Endothelial cell of umbilical vein (primary cell): ENCODE measurements at regions of chr4 and their contacts with region 1.

Region 1: DNA sequence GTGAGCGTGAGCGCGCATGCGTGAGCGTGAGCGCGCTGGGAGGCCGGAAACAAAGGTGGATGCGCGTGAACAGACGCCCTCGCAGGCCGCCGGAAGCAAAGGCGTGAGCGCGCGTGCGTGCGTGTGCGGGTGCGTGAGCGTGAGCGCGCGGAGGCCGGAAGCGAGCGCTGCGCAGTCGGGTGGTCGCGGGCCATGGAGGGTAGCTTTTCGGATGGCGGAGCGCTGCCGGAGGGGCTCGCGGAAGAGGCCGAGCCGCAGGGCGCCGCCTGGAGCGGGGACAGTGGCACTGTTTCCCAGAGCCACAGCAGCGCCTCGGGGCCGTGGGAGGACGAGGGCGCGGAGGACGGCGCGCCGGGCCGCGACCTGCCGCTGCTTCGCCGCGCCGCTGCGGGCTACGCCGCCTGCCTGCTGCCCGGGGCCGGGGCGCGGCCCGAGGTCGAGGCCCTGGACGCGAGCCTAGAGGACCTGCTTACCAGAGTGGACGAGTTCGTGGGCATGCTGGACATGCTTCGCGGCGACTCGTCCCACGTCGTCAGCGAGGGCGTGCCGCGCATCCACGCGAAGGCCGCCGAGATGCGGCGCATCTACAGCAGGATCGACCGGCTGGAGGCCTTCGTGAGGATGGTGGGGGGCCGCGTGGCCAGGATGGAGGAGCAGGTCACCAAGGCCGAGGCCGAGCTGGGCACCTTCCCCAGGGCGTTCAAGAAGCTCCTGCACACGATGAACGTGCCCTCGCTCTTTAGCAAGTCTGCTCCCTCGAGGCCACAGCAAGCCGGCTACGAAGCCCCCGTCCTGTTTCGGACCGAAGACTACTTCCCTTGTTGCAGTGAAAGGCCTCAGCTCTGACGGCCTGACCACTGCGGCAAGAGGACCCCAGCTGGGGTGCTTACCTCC is at the start of gene BLOC1S4:
- DNase-seq: peak; percentile 94
- H3K4me3 ChIP-seq: peak within 1 kb of the TSS; percentile 19 to 69 (median 63)
- H3K27ac ChIP-seq: peak within 1 kb of the TSS; percentile 14
- H3K4me1 ChIP-seq: peaks cover 10% of the 10 kb centered on the region
- H3K27me3 ChIP-seq: peaks cover 2 to 4% of the 10 kb centered on the region in 2 experiments
- CTCF ChIP-seq: peak in 1 of 2 donors; percentile 41
- POLR2A ChIP-seq: peak; percentile 92
- total RNA-seq, gene BLOC1S4: 12.7 and 13.1 TPM in 2 replicates

Region 2: DNA sequence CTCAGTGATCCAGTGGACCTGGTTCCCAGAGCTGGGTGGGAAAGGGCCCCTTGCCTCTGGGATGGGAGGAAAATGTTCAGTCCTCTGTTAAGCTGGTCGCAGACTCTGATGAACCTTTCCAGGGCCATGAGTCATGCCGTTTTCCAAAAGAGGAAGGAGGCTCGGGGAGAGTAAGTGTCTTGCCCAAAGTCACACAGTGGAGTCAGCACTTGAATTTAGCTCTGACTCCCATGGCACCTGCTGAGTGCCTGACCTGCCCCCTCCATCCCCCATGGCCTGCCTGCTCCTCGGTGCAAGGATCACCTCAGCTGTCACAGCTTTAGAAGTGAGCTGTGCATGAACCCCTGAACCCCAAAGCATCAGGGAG is 52.3 kb after region 1 on chr4:
- CTCF ChIA-PET with region 1: interaction called, 13 read pairs
- POLR2A ChIA-PET with region 1: no interaction called
- dilution Hi-C with region 1: no loop called
- intact Hi-C with region 1: no loop called
- DNase-seq: no peak
- H3K4me3 ChIP-seq: no peak overlapping the region
- H3K27ac ChIP-seq: no peak overlapping the region
- H3K4me1 ChIP-seq: no peaks in the 10 kb centered on the region
- H3K27me3 ChIP-seq: peaks cover 7 to 13% of the 10 kb centered on the region in 2 experiments
- CTCF ChIP-seq: no peak
- POLR2A ChIP-seq: no peak

Region 3: GRCh38 chr4:6873792-6874461 is 157.7 kb after region 1 on chr4:
- CTCF ChIA-PET with region 1: interaction called, 353 read pairs
- POLR2A ChIA-PET with region 1: no interaction called
- dilution Hi-C with region 1: no loop called
- intact Hi-C with region 1: loop called (anchors 1 kb)
- DNase-seq: peak; percentile 69
- H3K4me3 ChIP-seq: no peak overlapping the region
- H3K27ac ChIP-seq: no peak overlapping the region
- H3K4me1 ChIP-seq: no peaks in the 10 kb centered on the region
- H3K27me3 ChIP-seq: no peaks in the 10 kb centered on the region
- CTCF ChIP-seq: peak; percentile 83 to 88
- POLR2A ChIP-seq: no peak

Region 4: GRCh38 chr4:6953751-6954380 is 237.6 kb after region 1 on chr4:
- CTCF ChIA-PET with region 1: no interaction called
- POLR2A ChIA-PET with region 1: no interaction called
- dilution Hi-C with region 1: no loop called
- intact Hi-C with region 1: no loop called
- DNase-seq: no peak
- H3K4me3 ChIP-seq: no peak overlapping the region
- H3K27ac ChIP-seq: no peak overlapping the region
- H3K4me1 ChIP-seq: no peaks in the 10 kb centered on the region
- H3K27me3 ChIP-seq: no peaks in the 10 kb centered on the region
- CTCF ChIP-seq: no peak
- POLR2A ChIP-seq: no peak

Region 5: GRCh38 chr4:6986781-6987587 is 270.7 kb after region 1 on chr4:
- CTCF ChIA-PET with region 1: interaction called, 3 read pairs
- POLR2A ChIA-PET with region 1: no interaction called
- dilution Hi-C with region 1: no loop called
- intact Hi-C with region 1: loop called (anchors 2 kb)
- DNase-seq: peak; percentile 92
- H3K4me3 ChIP-seq: peak overlapping the region; percentile 62 to 80 (median 73)
- H3K27ac ChIP-seq: peak overlapping the region; percentile 77
- H3K4me1 ChIP-seq: peaks cover 60% of the 10 kb centered on the region
- H3K27me3 ChIP-seq: no peaks in the 10 kb centered on the region
- CTCF ChIP-seq: no peak
- POLR2A ChIP-seq: peak; percentile 87

Region 6: DNA sequence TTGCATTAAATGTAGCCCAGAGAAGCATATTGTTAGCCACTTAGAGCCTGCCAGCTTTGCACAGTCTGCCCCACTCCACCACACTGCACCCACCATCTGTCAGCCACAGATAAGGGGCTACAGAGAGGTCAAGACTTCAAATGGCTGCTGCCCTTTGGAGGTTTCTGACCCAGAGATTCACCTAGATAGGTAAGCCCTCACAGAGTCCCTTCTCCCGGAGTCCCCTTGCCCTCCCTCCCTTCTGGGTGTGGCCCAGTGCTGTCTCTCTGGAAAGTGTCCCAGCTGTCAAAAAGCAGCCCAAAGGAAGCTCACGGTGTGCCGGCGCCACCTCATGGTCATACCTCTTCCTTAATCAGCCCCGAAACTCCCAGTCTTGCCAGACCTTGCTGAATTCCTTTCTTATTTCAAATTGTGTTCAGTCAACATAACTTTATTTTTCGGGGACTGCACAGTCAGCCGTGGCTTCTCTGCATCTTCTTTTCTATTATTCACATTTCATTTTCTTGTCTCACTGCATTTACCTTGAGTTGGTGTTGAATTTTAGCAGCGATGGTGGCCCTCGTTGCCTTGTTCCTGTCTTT is 365.7 kb after region 1 on chr4:
- CTCF ChIA-PET with region 1: interaction called, 29 read pairs
- POLR2A ChIA-PET with region 1: no interaction called
- dilution Hi-C with region 1: no loop called
- intact Hi-C with region 1: no loop called
- DNase-seq: peak; percentile 23
- H3K4me3 ChIP-seq: no peak overlapping the region
- H3K27ac ChIP-seq: no peak overlapping the region
- H3K4me1 ChIP-seq: no peaks in the 10 kb centered on the region
- H3K27me3 ChIP-seq: peaks cover 22 to 26% of the 10 kb centered on the region in 2 experiments
- CTCF ChIP-seq: peak; percentile 16 to 40
- POLR2A ChIP-seq: no peak